Activated CD4-positive, alpha-beta memory T cell treated with anti-CD3 and anti-CD28 coated beads, Interleukin-2, amount 10 ng/mL, durations not matched to agents 7 days and 5 days (primary cell): ENCODE measurements at regions of chr11 and their contacts with region 1.

Region 1: GRCh38 chr11:57741132-57742086 is at the start of gene SELENOH:
- DNase-seq: peak; percentile 96
- H3K4me3 Mint-ChIP-seq: peak within 1 kb of the TSS; percentile 98
- H3K27ac Mint-ChIP-seq: peak within 1 kb of the TSS; percentile 95
- H3K4me1 Mint-ChIP-seq: peaks cover 26% of the 10 kb centered on the region
- H3K27me3 Mint-ChIP-seq: no peaks in the 10 kb centered on the region
- total RNA-seq, gene SELENOH: 148 to 162 TPM

Region 2: GRCh38 chr11:57335343-57336110 is 405.9 kb before region 1 on chr11 and contains the start of gene SSRP1:
- CTCF ChIA-PET with region 1: no interaction called
- POLR2A ChIA-PET with region 1: interaction called, 11 read pairs
- DNase-seq: peak; percentile 89
- H3K4me3 Mint-ChIP-seq: peak within 1 kb of the TSS; percentile 97
- H3K27ac Mint-ChIP-seq: peak within 1 kb of the TSS; percentile 98
- H3K4me1 Mint-ChIP-seq: peaks cover 45% of the 10 kb centered on the region
- H3K27me3 Mint-ChIP-seq: peaks cover 13% of the 10 kb centered on the region
- total RNA-seq, gene SSRP1: 135 to 137 TPM

Region 3: GRCh38 chr11:57667736-57668435 is 73.5 kb before region 1 on chr11 and contains the start of gene ZDHHC5:
- CTCF ChIA-PET with region 1: no interaction called
- POLR2A ChIA-PET with region 1: interaction called, 15 read pairs
- DNase-seq: peak; percentile 100
- H3K4me3 Mint-ChIP-seq: peak within 1 kb of the TSS; percentile 99
- H3K27ac Mint-ChIP-seq: peak within 1 kb of the TSS; percentile 99
- H3K4me1 Mint-ChIP-seq: peaks cover 51% of the 10 kb centered on the region
- H3K27me3 Mint-ChIP-seq: no peaks in the 10 kb centered on the region
- total RNA-seq, gene ZDHHC5: 77.6 to 86.6 TPM

Region 4: GRCh38 chr11:57712256-57713150 is 28.9 kb before region 1 on chr11 and contains the start of gene TMX2:
- CTCF ChIA-PET with region 1: interaction called, 6 read pairs
- POLR2A ChIA-PET with region 1: interaction called, 54 read pairs
- DNase-seq: peak; percentile 93
- H3K4me3 Mint-ChIP-seq: peak within 1 kb of the TSS; percentile 98
- H3K27ac Mint-ChIP-seq: peak within 1 kb of the TSS; percentile 90
- H3K4me1 Mint-ChIP-seq: peaks cover 58% of the 10 kb centered on the region
- H3K27me3 Mint-ChIP-seq: no peaks in the 10 kb centered on the region
- total RNA-seq, gene TMX2: 47.0 to 53.6 TPM

Region 5: GRCh38 chr11:57729479-57729878 is 11.9 kb before region 1 on chr11:
- CTCF ChIA-PET with region 1: interaction called, 4 read pairs
- POLR2A ChIA-PET with region 1: interaction called, 15 read pairs
- DNase-seq: no peak
- H3K4me3 Mint-ChIP-seq: no peak overlapping the region
- H3K27ac Mint-ChIP-seq: no peak overlapping the region
- H3K4me1 Mint-ChIP-seq: peaks cover 10% of the 10 kb centered on the region
- H3K27me3 Mint-ChIP-seq: no peaks in the 10 kb centered on the region

Region 6: DNA sequence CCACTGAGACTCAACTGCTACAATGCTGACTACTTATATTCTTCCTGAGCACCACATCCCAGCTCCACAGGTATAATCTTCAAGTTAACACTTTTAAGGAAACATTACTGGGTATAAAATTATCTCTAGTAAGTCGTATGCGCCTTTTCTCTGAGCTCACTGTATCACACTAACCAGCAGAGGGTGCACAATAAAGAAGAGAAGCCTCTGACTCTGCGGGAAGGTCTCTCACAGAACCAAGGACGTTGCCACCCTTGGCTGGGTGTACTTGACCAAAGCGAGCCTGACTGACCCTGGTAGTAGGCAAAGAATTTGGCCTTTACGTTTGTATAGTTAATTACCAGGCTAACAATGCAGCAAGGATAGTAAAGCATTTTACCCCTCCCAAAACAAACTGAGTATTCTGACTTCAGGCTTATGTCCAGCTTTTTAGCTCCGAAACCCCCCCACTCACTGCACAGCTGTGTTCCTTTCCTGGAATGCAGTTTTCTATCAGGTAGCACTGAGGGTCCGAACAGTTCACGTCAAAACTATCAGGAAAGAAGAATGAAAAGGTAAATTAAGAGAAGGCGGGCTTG is 10.4 kb after region 1 on chr11 and contains the start of gene BTBD18:
- CTCF ChIA-PET with region 1: interaction called, 4 read pairs
- POLR2A ChIA-PET with region 1: interaction called, 13 read pairs
- DNase-seq: no peak
- H3K4me3 Mint-ChIP-seq: no peak within 1 kb of the TSS
- H3K27ac Mint-ChIP-seq: no peak within 1 kb of the TSS
- H3K4me1 Mint-ChIP-seq: peaks cover 4% of the 10 kb centered on the region
- H3K27me3 Mint-ChIP-seq: no peaks in the 10 kb centered on the region
- total RNA-seq, gene BTBD18: not detected

Region 7: DNA sequence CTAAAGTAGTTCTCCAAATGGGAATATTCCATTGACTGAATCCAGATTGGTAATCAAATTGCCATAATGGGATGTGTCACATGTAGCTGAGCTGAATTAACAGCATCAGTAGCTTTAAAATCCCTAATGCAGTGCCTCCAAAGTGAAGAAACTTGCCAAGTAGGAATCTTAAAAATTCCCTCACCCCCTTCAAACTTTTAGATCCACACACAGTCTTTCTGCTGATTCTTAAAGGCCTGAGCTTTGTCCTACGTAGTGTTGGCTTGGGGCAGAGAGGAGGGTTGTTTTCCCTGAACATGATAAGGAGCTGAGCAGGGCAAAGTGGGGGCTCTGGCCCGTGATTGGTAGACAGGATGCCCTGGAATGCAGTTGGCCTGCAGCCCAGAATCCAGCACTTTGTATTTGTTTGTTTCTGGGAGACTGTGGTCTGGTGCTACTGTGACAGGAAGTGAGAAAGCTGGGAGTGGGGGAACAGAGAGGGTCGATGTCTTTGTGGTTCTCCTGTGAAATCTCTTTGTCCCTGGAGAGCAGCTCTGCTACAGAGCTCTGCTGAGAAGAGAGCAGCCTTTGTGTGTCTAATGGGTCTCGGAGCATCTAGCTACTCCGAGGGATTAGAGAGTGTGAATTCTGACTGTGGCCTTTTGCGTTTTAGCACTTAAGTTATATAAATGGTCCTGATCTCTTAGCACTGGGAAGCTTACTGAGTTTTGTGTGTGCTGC is 37.1 kb after region 1 on chr11:
- CTCF ChIA-PET with region 1: no interaction called
- POLR2A ChIA-PET with region 1: no interaction called
- DNase-seq: no peak
- H3K4me3 Mint-ChIP-seq: no peak overlapping the region
- H3K27ac Mint-ChIP-seq: no peak overlapping the region
- H3K4me1 Mint-ChIP-seq: peaks cover 8% of the 10 kb centered on the region
- H3K27me3 Mint-ChIP-seq: peaks cover 4% of the 10 kb centered on the region

Region 8: DNA sequence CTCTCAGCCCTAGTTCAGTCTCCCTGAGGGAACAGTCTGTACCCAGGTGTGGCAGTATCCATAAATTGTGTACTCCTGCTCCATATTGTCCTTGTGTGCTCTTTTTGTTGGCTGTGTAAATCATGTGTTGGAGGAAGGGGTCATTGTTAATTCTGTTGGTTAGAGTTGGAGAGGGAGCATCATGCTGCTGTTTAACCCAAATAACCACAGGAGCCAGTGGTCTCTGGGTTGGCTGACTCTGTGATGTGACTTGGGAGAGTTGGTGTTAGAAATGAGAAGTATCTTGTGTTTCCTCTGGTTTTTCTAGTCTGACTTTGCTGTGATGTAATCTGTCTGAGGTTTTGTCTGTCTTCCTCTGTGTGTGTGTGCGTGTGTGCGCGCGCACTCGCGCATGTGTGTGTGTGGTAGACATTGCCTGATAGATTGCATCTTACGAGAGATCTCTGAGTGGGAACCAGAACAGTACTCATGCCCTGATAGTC is 50.7 kb after region 1 on chr11:
- CTCF ChIA-PET with region 1: interaction called, 3 read pairs
- POLR2A ChIA-PET with region 1: interaction called, 35 read pairs
- DNase-seq: peak; percentile 89
- H3K4me3 Mint-ChIP-seq: peak overlapping the region; percentile 54
- H3K27ac Mint-ChIP-seq: peak overlapping the region; percentile 89
- H3K4me1 Mint-ChIP-seq: peaks cover 41% of the 10 kb centered on the region
- H3K27me3 Mint-ChIP-seq: no peaks in the 10 kb centered on the region